ENCODE measurements at regions of chr3 and their contacts with region 1.

Region 1: GRCh38 chr3:52046186-52046913 is 10.0 kb downstream of the DUSP7 start:
- DNase-seq: peak; percentile 95
- H3K4me3 ChIP-seq: no peak overlapping the region
- CTCF ChIP-seq: no peak

Region 2: GRCh38 chr3:52090131-52090932 is 44.0 kb after region 1 on chr3:
- in situ Hi-C with region 1: loop called (anchors 5 kb)
- DNase-seq: peak; percentile 97
- H3K4me3 ChIP-seq: no peak overlapping the region
- CTCF ChIP-seq: no peak

Region 3: DNA sequence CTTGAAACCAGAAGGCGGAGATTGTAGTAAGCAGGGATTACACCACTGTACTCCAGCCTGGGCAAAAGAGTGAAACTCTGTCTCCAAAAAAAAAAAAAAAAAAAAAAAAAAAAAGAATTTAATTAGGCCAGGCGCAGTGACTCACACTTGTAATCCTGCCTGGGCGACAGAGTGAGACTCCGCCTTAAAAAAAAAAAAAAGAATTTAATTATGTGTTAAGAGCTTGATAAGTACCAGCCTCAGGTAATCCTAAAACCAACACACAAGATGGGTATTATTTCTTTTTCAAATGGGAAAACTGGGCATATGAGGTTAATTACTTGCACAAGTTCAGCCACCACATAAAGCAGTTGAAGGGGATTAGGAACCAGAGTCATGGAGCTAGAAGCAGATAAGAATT is 590.3 kb after region 1 on chr3:
- in situ Hi-C with region 1: no loop called
- DNase-seq: no peak
- H3K4me3 ChIP-seq: no peak overlapping the region
- CTCF ChIP-seq: no peak

Measured in astrocyte of the spinal cord (primary cell).